Endothelial cell of umbilical vein (primary cell): ENCODE measurements at regions of chr20 and their contacts with region 1.

Region 1: DNA sequence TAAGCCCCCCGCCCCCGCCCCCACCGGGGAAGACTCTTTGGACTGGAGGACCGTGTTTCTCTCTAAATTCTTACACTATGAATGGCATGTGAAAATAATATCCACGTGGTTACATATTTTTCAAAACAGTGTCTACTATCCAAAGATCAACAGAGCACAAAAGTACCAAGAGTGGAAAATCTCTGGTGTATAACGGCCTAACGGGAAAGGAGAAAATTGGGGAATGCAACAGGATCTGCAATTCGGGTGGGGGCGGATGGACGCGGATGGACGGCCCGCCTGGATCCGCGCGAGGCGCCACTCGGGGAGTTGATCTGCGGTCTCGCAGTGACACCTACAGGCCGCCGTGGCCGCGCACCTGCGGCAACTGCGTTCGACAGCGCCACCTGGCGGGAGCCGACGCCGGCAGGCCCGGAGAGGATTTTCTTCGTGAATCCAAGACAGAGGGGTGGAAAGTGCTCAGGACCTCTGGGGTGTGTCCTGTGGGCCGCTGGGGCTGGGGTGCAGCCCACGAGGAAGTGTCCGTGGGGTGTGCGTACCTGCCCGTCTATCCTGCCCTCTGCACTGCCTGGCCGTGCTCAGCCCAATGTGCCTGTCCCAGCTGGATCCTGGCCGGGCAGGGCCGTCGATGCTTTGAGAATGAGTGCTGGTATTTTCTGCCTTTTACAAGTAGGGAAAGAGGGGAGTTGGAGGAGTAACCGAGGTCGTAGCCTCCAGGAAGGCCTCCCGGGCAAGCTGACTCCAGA is 18.6 kb downstream of the ANKRD60 start:
- DNase-seq: peak; percentile 70
- H3K4me3 ChIP-seq: no peak overlapping the region
- H3K27ac ChIP-seq: no peak overlapping the region
- H3K4me1 ChIP-seq: no peaks in the 10 kb centered on the region
- H3K27me3 ChIP-seq: no peaks in the 10 kb centered on the region
- CTCF ChIP-seq: peak; percentile 100
- POLR2A ChIP-seq: no peak

Region 2: DNA sequence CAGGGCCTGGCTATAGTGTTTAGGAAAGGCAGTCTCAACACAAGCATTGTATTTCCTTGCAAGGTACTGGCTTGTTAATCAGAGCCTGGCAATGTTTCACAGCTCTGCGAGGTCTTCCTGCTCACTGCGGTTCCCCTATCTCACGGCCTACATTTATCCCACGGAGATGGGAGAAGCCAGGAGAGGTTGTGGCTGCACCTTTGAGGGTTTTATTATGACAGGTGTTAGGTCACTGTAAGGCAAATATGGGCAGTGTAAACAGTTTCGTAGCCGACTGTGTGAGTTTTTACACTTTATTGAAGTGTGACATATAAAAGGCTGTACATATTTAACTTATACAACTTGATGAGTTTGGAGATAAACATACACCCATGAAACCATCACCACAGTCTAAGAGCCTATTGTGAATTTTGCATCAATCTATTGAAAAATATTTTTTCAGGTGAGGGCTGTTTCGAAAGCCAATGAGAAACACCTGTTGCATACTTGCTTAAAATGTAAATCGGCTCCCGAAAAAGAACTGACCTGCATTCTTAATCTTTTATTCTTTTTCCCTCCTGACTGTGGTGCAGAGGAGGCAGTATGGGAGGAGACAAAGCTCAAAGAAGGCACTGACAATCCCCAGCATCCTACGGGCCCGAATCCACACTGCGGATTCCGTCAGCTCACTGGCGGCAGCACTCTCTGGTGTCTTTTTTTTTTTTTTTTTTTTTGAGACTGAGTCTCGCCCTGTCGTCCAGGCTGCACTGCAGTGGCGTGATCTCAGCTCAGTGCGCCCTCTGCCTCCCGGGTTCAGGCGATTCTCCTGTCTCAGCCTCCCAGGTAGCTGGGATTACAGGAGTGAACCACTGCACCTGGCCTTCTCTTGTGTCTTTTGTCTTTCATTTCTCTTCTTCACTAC is 826.1 kb before region 1 on chr20:
- CTCF ChIA-PET with region 1: interaction called, 3 read pairs
- POLR2A ChIA-PET with region 1: no interaction called
- dilution Hi-C with region 1: no loop called
- intact Hi-C with region 1: loop called (anchors 5 kb)
- DNase-seq: no peak
- H3K4me3 ChIP-seq: no peak overlapping the region
- H3K27ac ChIP-seq: no peak overlapping the region
- H3K4me1 ChIP-seq: no peaks in the 10 kb centered on the region
- H3K27me3 ChIP-seq: no peaks in the 10 kb centered on the region
- CTCF ChIP-seq: no peak
- POLR2A ChIP-seq: no peak

Region 3: GRCh38 chr20:57514273-57514751 is 695.5 kb before region 1 on chr20:
- CTCF ChIA-PET with region 1: interaction called, 10 read pairs
- POLR2A ChIA-PET with region 1: interaction called, 3 read pairs
- dilution Hi-C with region 1: no loop called
- intact Hi-C with region 1: loop called (anchors 1 kb)
- DNase-seq: peak; percentile 68
- H3K4me3 ChIP-seq: no peak overlapping the region
- H3K27ac ChIP-seq: no peak overlapping the region
- H3K4me1 ChIP-seq: no peaks in the 10 kb centered on the region
- H3K27me3 ChIP-seq: no peaks in the 10 kb centered on the region
- CTCF ChIP-seq: peak; percentile 53 to 63
- POLR2A ChIP-seq: no peak

Region 4: DNA sequence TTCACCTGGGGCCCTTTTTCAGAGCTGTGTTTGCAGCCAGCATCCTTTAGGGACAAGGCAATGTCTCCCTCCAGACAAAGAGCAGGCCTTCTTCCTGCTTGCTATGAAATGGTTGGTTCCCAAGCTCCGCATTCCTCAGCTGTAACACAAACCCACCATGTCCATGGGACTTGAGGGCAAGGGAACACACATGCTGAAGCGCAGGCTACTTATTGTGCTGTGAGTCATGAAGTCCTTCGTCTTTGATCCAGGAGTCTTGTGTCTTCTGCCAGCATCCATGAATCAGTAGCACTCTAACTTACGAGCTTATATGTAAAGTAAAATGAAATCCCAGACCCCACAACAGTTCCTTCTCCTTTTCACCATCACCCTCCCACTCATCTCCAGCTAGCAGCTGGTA is 40.4 kb before region 1 on chr20:
- CTCF ChIA-PET with region 1: no interaction called
- POLR2A ChIA-PET with region 1: no interaction called
- dilution Hi-C with region 1: no loop called
- intact Hi-C with region 1: no loop called
- DNase-seq: no peak
- H3K4me3 ChIP-seq: no peak overlapping the region
- H3K27ac ChIP-seq: no peak overlapping the region
- H3K4me1 ChIP-seq: no peaks in the 10 kb centered on the region
- H3K27me3 ChIP-seq: peaks cover 0 to 4% of the 10 kb centered on the region in 2 experiments
- CTCF ChIP-seq: no peak
- POLR2A ChIP-seq: no peak

Region 5: GRCh38 chr20:58192567-58192966 is 17.3 kb before region 1 on chr20:
- CTCF ChIA-PET with region 1: interaction called, 4 read pairs
- POLR2A ChIA-PET with region 1: no interaction called
- dilution Hi-C with region 1: no loop called
- intact Hi-C with region 1: loop called (anchors 1 kb)
- DNase-seq: peak; percentile 9
- H3K4me3 ChIP-seq: no peak overlapping the region
- H3K27ac ChIP-seq: no peak overlapping the region
- H3K4me1 ChIP-seq: no peaks in the 10 kb centered on the region
- H3K27me3 ChIP-seq: peaks cover 0 to 1% of the 10 kb centered on the region in 2 experiments
- CTCF ChIP-seq: peak; percentile 69 to 75
- POLR2A ChIP-seq: no peak

Region 6: DNA sequence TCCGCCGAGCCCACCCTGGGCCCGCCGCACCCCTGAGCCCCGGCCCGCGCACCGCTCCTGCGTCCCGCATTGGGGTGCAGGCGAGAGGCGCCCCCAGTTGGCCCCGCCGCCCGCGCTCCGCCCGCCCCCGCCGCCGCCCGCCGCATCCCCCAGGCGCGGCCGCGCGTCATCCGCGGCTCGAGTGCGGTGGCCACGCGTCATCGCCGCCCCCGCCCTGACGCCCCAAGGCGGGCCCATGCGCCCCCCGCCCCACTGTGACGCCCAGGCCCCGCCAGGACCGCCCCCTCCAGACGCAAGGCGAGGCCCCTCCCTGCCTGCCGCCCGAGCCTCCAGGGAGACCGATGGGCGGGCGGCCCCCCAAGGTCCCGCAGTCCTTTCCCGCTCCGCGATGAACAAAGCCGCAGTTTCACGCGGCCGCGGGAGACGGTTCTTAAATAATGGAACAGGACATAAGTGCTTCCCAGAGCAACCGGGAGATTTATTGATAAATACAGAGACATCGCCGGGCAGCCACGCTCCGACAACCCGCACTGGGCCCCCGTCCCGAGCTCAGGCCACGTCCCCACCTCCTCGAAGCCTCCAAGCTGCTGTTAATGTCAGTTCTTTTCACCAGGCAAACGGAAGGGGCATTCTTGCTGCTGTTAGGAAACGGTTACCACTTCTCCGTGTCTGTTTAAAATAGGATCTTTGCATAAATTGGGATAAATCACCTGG is 18.8 kb after region 1 on chr20 and contains the start of gene ANKRD60:
- CTCF ChIA-PET with region 1: no interaction called
- POLR2A ChIA-PET with region 1: no interaction called
- dilution Hi-C with region 1: no loop called
- intact Hi-C with region 1: no loop called
- DNase-seq: peak; percentile 36
- H3K4me3 ChIP-seq: peak within 1 kb of the TSS; percentile 32 to 62 (median 39)
- H3K27ac ChIP-seq: no peak within 1 kb of the TSS
- H3K4me1 ChIP-seq: peaks cover 8% of the 10 kb centered on the region
- H3K27me3 ChIP-seq: peaks cover 28 to 50% of the 10 kb centered on the region in 2 experiments
- CTCF ChIP-seq: no peak
- POLR2A ChIP-seq: no peak
- total RNA-seq, gene ANKRD60: not detected in 2 replicates